Naive thymus-derived CD4-positive, alpha-beta T cell (primary cell): ENCODE measurements at regions of chr19 and their contacts with region 1.

Region 1: GRCh38 chr19:12139885-12140547 is at the start of gene ZNF20:
- DNase-seq: peak; percentile 68 to 90 (median 72)
- ATAC-seq: peak; percentile 95
- H3K4me3 ChIP-seq: peak within 1 kb of the TSS; percentile 74
- H3K4me3 Mint-ChIP-seq: peak within 1 kb of the TSS; percentile 82 to 96 (median 89)
- H3K27ac ChIP-seq: peak within 1 kb of the TSS; percentile 77
- H3K27ac Mint-ChIP-seq: peak within 1 kb of the TSS; percentile 40 to 96 (median 79)
- H3K4me1 ChIP-seq: peaks cover 18 to 24% of the 10 kb centered on the region in 2 donors
- H3K4me1 Mint-ChIP-seq: peaks cover 25 to 44% (median 35%) of the 10 kb centered on the region in 7 donors
- H3K27me3 ChIP-seq: no peaks in the 10 kb centered on the region
- H3K27me3 Mint-ChIP-seq: no peaks in the 10 kb centered on the region
- total RNA-seq, gene ZNF20: 1.2 to 6.7 (median 4.8) TPM

Region 2: GRCh38 chr19:11699931-11700794 is 439.9 kb before region 1 on chr19:
- CTCF ChIA-PET with region 1: no interaction called
- POLR2A ChIA-PET with region 1: no interaction called
- intact Hi-C with region 1: loop called in 1 of 2 experiments (anchors 1 kb)
- DNase-seq: peak in 6 of 9 donors; percentile 10 to 34 (median 29)
- ATAC-seq: no peak
- H3K4me3 ChIP-seq: no peak overlapping the region
- H3K4me3 Mint-ChIP-seq: no peak overlapping the region
- H3K27ac ChIP-seq: no peak overlapping the region
- H3K27ac Mint-ChIP-seq: no peak overlapping the region
- H3K4me1 ChIP-seq: peaks cover 0 to under 1% of the 10 kb centered on the region in 2 donors
- H3K4me1 Mint-ChIP-seq: peaks cover 0 to 5% (median 4%) of the 10 kb centered on the region in 7 donors
- H3K27me3 ChIP-seq: peaks cover 0 to 2% of the 10 kb centered on the region in 2 donors
- H3K27me3 Mint-ChIP-seq: peaks cover 2 to 13% (median 6%) of the 10 kb centered on the region in 5 donors

Region 3: DNA sequence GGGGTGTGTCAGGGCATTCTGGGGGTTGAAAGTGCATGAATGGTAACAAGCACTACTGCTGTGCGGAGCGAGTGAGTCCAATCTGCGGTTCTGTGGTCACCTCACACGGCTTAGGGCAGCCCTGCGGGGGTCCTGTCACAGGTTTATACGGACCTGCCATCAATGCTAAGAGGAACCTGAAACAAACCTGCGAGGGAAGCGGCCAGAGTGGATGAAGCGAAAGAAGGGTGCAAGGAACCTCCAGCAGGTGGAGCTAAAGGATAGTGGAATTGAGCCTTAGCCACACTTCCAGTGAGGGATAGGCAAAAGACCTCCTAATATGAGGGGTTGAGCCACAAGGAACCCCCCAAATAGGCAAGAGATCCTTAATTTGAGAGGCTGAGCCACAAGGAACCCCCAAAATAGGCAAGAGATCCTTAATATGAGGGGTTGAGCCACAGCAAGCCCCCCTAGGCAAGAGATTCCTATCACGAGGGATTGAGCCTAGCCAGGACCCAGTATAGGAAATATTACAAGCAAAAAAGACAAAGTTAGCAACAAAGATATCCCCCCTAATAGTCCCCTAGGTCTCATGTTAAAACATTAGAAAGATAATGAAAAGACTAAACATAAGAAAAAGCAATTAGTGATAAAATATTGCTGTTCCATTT is 258.7 kb before region 1 on chr19:
- CTCF ChIA-PET with region 1: interaction called, 5 read pairs
- POLR2A ChIA-PET with region 1: no interaction called
- intact Hi-C with region 1: loop called (anchors 1 kb)
- DNase-seq: peak; percentile 20 to 72 (median 59)
- ATAC-seq: peak; percentile 74
- H3K4me3 ChIP-seq: no peak overlapping the region
- H3K4me3 Mint-ChIP-seq: peak overlapping the region in 1 of 10 donors; percentile 31
- H3K27ac ChIP-seq: no peak overlapping the region
- H3K27ac Mint-ChIP-seq: peak overlapping the region in 3 of 9 donors; percentile 3 to 15 (median 12)
- H3K4me1 ChIP-seq: no peaks in the 10 kb centered on the region
- H3K4me1 Mint-ChIP-seq: peaks cover 0 to 7% (median 0%) of the 10 kb centered on the region in 7 donors
- H3K27me3 ChIP-seq: no peaks in the 10 kb centered on the region
- H3K27me3 Mint-ChIP-seq: peaks cover 0 to 3% (median 0%) of the 10 kb centered on the region in 5 donors

Region 4: GRCh38 chr19:11964858-11965645 is 175.0 kb before region 1 on chr19 and contains the start of gene ZNF763:
- CTCF ChIA-PET with region 1: interaction called, 8 read pairs
- POLR2A ChIA-PET with region 1: interaction called, 3 read pairs
- intact Hi-C with region 1: loop called (anchors 1 kb)
- DNase-seq: peak; percentile 70 to 86 (median 83)
- ATAC-seq: peak; percentile 95
- H3K4me3 ChIP-seq: peak within 1 kb of the TSS; percentile 90
- H3K4me3 Mint-ChIP-seq: peak within 1 kb of the TSS; percentile 87 to 99 (median 94)
- H3K27ac ChIP-seq: peak within 1 kb of the TSS; percentile 88
- H3K27ac Mint-ChIP-seq: peak within 1 kb of the TSS; percentile 89 to 97 (median 94)
- H3K4me1 ChIP-seq: peaks cover 8 to 10% of the 10 kb centered on the region in 2 donors
- H3K4me1 Mint-ChIP-seq: peaks cover 21 to 34% (median 27%) of the 10 kb centered on the region in 7 donors
- H3K27me3 ChIP-seq: no peaks in the 10 kb centered on the region
- H3K27me3 Mint-ChIP-seq: no peaks in the 10 kb centered on the region
- total RNA-seq, gene ZNF763: 1.3 to 17.3 (median 4.4) TPM

Region 5: DNA sequence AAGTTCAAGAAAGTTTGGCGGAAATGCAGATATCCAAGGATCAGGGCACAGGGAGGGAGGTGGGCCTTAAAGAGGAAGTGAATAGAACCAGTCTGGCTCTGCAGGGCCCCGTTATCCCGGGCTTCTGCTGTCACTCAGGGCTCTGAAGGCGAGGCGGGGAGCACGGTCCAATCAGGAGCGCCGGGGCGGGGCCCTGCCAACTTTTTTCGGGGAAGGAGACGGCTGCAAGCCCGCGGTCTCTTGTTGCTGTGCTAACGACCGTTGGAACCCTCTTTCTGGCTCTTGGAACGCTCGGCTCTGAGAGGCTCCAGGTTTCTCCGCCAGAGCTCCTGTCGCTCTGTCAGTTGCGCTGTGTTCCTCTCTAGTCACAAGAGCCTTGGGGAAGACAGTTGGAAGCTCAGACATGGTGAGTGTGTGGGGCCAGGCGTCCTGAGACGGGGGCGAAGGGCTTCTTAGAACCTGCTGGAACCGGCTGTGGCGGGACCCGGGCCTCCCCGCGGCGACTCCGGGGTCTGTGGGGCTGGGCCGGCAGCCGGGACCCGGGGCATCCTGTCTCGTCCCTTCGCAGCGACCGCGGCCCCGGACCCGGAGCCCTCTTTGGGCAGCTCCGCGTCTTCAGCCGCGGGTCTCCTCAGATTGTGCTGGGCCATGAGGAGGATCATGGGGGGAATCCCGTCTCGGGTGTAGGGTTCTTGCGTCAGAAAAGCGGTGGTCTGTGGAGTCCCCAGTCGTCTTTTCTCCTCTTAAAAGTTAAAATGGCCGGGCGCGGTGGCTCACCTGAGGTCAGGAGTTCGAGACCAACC is 47.8 kb before region 1 on chr19:
- CTCF ChIA-PET with region 1: interaction called, 9 read pairs
- POLR2A ChIA-PET with region 1: no interaction called
- intact Hi-C with region 1: loop called (anchors 1 kb)
- DNase-seq: peak in 8 of 9 donors; percentile 11 to 63 (median 22)
- ATAC-seq: peak; percentile 82
- H3K4me3 ChIP-seq: peak overlapping the region; percentile 45
- H3K4me3 Mint-ChIP-seq: peak overlapping the region; percentile 72 to 88 (median 82)
- H3K27ac ChIP-seq: peak overlapping the region; percentile 35
- H3K27ac Mint-ChIP-seq: peak overlapping the region in 6 of 9 donors; percentile 31 to 85 (median 64)
- H3K4me1 ChIP-seq: peaks cover 0 to 5% of the 10 kb centered on the region in 2 donors
- H3K4me1 Mint-ChIP-seq: peaks cover 5 to 19% (median 8%) of the 10 kb centered on the region in 7 donors
- H3K27me3 ChIP-seq: no peaks in the 10 kb centered on the region
- H3K27me3 Mint-ChIP-seq: peaks cover 0 to 17% (median 4%) of the 10 kb centered on the region in 5 donors

Region 6: GRCh38 chr19:12162882-12163806 is 23.1 kb after region 1 on chr19 and contains the start of gene ZNF136:
- CTCF ChIA-PET with region 1: interaction called, 8 read pairs
- POLR2A ChIA-PET with region 1: interaction called, 10 read pairs
- intact Hi-C with region 1: loop called (anchors 1 to 2 kb)
- DNase-seq: peak; percentile 77 to 95 (median 91)
- ATAC-seq: peak; percentile 99
- H3K4me3 ChIP-seq: peak within 1 kb of the TSS; percentile 78
- H3K4me3 Mint-ChIP-seq: peak within 1 kb of the TSS; percentile 88 to 100 (median 98)
- H3K27ac ChIP-seq: peak within 1 kb of the TSS; percentile 96
- H3K27ac Mint-ChIP-seq: peak within 1 kb of the TSS; percentile 88 to 100 (median 98)
- H3K4me1 ChIP-seq: peaks cover 7 to 15% of the 10 kb centered on the region in 2 donors
- H3K4me1 Mint-ChIP-seq: peaks cover 28 to 64% (median 46%) of the 10 kb centered on the region in 7 donors
- H3K27me3 ChIP-seq: no peaks in the 10 kb centered on the region
- H3K27me3 Mint-ChIP-seq: no peaks in the 10 kb centered on the region
- total RNA-seq, gene ZNF136: 16.8 to 36.8 (median 31.1) TPM

Region 7: GRCh38 chr19:12580163-12580694 is 440.2 kb after region 1 on chr19:
- CTCF ChIA-PET with region 1: no interaction called
- POLR2A ChIA-PET with region 1: no interaction called
- intact Hi-C with region 1: no loop called
- DNase-seq: no peak
- ATAC-seq: no peak
- H3K4me3 ChIP-seq: no peak overlapping the region
- H3K4me3 Mint-ChIP-seq: no peak overlapping the region
- H3K27ac ChIP-seq: no peak overlapping the region
- H3K27ac Mint-ChIP-seq: no peak overlapping the region
- H3K4me1 ChIP-seq: no peaks in the 10 kb centered on the region
- H3K4me1 Mint-ChIP-seq: peaks cover 0 to 6% (median 0%) of the 10 kb centered on the region in 7 donors
- H3K27me3 ChIP-seq: no peaks in the 10 kb centered on the region
- H3K27me3 Mint-ChIP-seq: no peaks in the 10 kb centered on the region